ENCODE measurements at regions of chr10 and their contacts with region 1.

Region 1: DNA sequence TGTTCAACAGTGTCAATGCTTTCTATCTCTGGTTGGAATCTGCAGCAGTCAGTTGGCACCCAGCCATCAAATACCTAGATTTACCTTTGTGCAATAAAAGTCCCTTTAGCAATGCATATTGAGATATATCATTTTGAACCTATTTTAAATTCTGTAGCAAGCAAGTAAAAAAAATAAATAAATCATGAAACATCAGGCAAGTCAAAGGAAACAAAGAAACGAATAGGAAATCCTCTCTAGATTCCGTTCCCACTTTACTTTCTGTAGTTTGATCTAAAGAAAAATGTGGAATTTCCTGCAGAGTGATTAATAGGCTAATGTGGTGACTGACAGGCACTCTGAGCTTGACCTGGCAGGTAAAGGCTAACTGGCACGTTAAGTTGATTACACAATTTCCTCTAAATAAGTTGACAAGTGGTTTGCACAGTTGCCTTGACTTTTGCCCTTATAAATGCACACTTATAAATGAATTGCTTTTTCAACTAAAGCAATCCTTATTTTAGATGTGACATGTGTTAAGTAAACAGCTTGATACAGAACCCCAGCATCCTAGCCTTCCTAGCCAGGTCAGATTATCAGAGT is 208.1 kb upstream of the TCF7L2 start:
- DNase-seq: peak; percentile 63
- H3K4me3 ChIP-seq: no peak overlapping the region
- H3K27ac ChIP-seq: no peak overlapping the region
- H3K4me1 ChIP-seq: peaks cover 21% of the 10 kb centered on the region
- H3K27me3 ChIP-seq: no peaks in the 10 kb centered on the region
- CTCF ChIP-seq: no peak
- POLR2A ChIP-seq: no peak

Region 2: GRCh38 chr10:112701211-112701877 is 40.6 kb before region 1 on chr10:
- CTCF ChIA-PET with region 1: no interaction called
- POLR2A ChIA-PET with region 1: no interaction called
- dilution Hi-C with region 1: no loop called
- intact Hi-C with region 1: no loop called
- DNase-seq: no peak
- H3K4me3 ChIP-seq: no peak overlapping the region
- H3K27ac ChIP-seq: no peak overlapping the region
- H3K4me1 ChIP-seq: no peaks in the 10 kb centered on the region
- H3K27me3 ChIP-seq: no peaks in the 10 kb centered on the region
- CTCF ChIP-seq: no peak
- POLR2A ChIP-seq: no peak

Region 3: GRCh38 chr10:112756238-112756532 is 14.3 kb after region 1 on chr10:
- CTCF ChIA-PET with region 1: no interaction called
- POLR2A ChIA-PET with region 1: no interaction called
- dilution Hi-C with region 1: no loop called
- intact Hi-C with region 1: no loop called
- DNase-seq: no peak
- H3K4me3 ChIP-seq: no peak overlapping the region
- H3K27ac ChIP-seq: no peak overlapping the region
- H3K4me1 ChIP-seq: no peaks in the 10 kb centered on the region
- H3K27me3 ChIP-seq: no peaks in the 10 kb centered on the region
- CTCF ChIP-seq: no peak
- POLR2A ChIP-seq: no peak

Region 4: DNA sequence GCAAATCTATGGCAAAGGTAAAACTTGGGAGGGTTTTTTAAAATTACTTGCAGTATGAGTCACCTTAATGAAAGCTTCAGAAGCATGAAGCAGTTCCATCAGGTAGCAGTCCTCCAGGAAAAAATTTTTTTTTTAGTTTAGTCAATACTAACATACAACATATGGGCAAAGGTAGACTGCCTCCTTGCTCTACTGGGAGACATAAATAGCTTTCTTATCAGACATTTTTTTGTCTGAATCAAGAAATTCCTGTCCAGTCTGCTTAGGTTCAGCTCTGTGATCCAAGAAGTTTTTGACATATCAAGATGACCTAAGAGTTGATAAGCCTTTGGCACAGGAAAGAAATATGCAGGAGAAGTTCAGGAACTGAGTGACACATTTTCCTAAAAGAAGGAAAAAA is 36.7 kb after region 1 on chr10:
- CTCF ChIA-PET with region 1: interaction called, 5 read pairs
- POLR2A ChIA-PET with region 1: no interaction called
- dilution Hi-C with region 1: no loop called
- intact Hi-C with region 1: loop called (anchors 1 kb)
- DNase-seq: peak; percentile 58
- H3K4me3 ChIP-seq: no peak overlapping the region
- H3K27ac ChIP-seq: no peak overlapping the region
- H3K4me1 ChIP-seq: peaks cover 17% of the 10 kb centered on the region
- H3K27me3 ChIP-seq: no peaks in the 10 kb centered on the region
- CTCF ChIP-seq: no peak
- POLR2A ChIP-seq: no peak

Measured in endothelial cell of umbilical vein (primary cell).